ENCODE measurements at regions of chr6 and their contacts with region 1.

Region 1: DNA sequence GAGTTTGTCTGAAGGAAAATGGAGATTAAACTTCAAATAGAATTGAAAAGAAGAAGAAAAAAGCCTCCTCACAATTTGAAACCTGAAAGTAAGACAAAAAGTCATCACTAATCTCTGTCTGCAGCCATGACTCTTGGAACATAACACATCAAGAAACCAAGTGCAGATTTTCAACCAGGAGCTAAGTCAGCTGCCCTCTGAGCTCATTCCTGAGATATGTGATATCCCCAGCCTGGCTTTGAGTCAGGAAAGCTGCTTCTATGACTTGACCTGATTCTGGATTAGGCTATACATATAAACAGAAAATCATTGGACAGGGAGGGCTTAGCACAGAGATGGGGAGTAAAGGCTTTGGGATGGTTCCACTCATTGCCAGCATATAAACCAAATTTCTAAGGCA is 891.4 kb downstream of the TFAP2A start:
- DNase-seq: peak; percentile 84
- H3K4me3 ChIP-seq: no peak overlapping the region
- H3K27ac ChIP-seq: peak overlapping the region; percentile 40
- H3K27me3 ChIP-seq: no peaks in the 10 kb centered on the region
- CTCF ChIP-seq: no peak

Region 2: GRCh38 chr6:9482030-9482738 is 41.3 kb before region 1 on chr6:
- CTCF ChIA-PET with region 1: no interaction called
- POLR2A ChIA-PET with region 1: interaction called, 10 read pairs
- DNase-seq: peak; percentile 76
- H3K4me3 ChIP-seq: no peak overlapping the region
- H3K27ac ChIP-seq: peak overlapping the region; percentile 34
- H3K27me3 ChIP-seq: no peaks in the 10 kb centered on the region
- CTCF ChIP-seq: no peak

Region 3: GRCh38 chr6:9732056-9732455 is 208.6 kb after region 1 on chr6:
- CTCF ChIA-PET with region 1: no interaction called
- POLR2A ChIA-PET with region 1: no interaction called
- DNase-seq: no peak
- H3K4me3 ChIP-seq: no peak overlapping the region
- H3K27ac ChIP-seq: no peak overlapping the region
- H3K27me3 ChIP-seq: no peaks in the 10 kb centered on the region
- CTCF ChIP-seq: no peak